ENCODE measurements at regions of chr4 and their contacts with region 1.

Region 1: GRCh38 chr4:103099691-103100392 is at the start of gene BDH2:
- DNase-seq: peak; percentile 85
- ATAC-seq: peak; percentile 87
- H3K4me3 ChIP-seq: peak within 1 kb of the TSS; percentile 52 to 70 (median 66)
- H3K27ac ChIP-seq: no peak within 1 kb of the TSS
- H3K4me1 ChIP-seq: peaks cover 47% of the 10 kb centered on the region
- H3K27me3 ChIP-seq: no peaks in the 10 kb centered on the region
- CTCF ChIP-seq: peak; percentile 90
- EP300 ChIP-seq: 0 out of 4 replicates have a peak, but pooled peaks of 1 of the 2 experiments have one; percentile 5
- POLR2A ChIP-seq: no peak
- RAD21 ChIP-seq: peak; percentile 72
- total RNA-seq, gene BDH2: 46.2 and 61.0 TPM in 2 replicates

Region 2: GRCh38 chr4:101123231-101123630 is 1976.6 kb before region 1 on chr4:
- CTCF ChIA-PET with region 1: no interaction called
- POLR2A ChIA-PET with region 1: no interaction called
- in situ Hi-C with region 1: no loop called
- intact Hi-C with region 1: loop called (anchors 5 kb)
- DNase-seq: no peak
- ATAC-seq: no peak
- H3K4me3 ChIP-seq: no peak overlapping the region
- H3K27ac ChIP-seq: no peak overlapping the region
- H3K4me1 ChIP-seq: peaks cover 13% of the 10 kb centered on the region
- H3K27me3 ChIP-seq: no peaks in the 10 kb centered on the region
- CTCF ChIP-seq: no peak
- EP300 ChIP-seq: no peak
- POLR2A ChIP-seq: no peak
- RAD21 ChIP-seq: no peak

Region 3: GRCh38 chr4:102430461-102430910 is 669.4 kb before region 1 on chr4:
- CTCF ChIA-PET with region 1: interaction called, 3 read pairs
- POLR2A ChIA-PET with region 1: no interaction called
- in situ Hi-C with region 1: loop called (anchors 10 kb)
- intact Hi-C with region 1: loop called (anchors 5 kb)
- DNase-seq: no peak
- ATAC-seq: no peak
- H3K4me3 ChIP-seq: peak overlapping the region; percentile 57 to 78 (median 63)
- H3K27ac ChIP-seq: peak overlapping the region; percentile 42
- H3K4me1 ChIP-seq: peaks cover 18% of the 10 kb centered on the region
- H3K27me3 ChIP-seq: no peaks in the 10 kb centered on the region; a peak in 1 of 5 replicates
- CTCF ChIP-seq: no peak
- EP300 ChIP-seq: no peak
- POLR2A ChIP-seq: no peak
- RAD21 ChIP-seq: no peak

Region 4: GRCh38 chr4:102439236-102439614 is 660.6 kb before region 1 on chr4:
- CTCF ChIA-PET with region 1: no interaction called
- POLR2A ChIA-PET with region 1: no interaction called
- in situ Hi-C with region 1: loop called (anchors 10 kb)
- intact Hi-C with region 1: loop called (anchors 5 kb)
- DNase-seq: peak; percentile 33
- ATAC-seq: no peak
- H3K4me3 ChIP-seq: no peak overlapping the region
- H3K27ac ChIP-seq: no peak overlapping the region
- H3K4me1 ChIP-seq: peaks cover 64% of the 10 kb centered on the region
- H3K27me3 ChIP-seq: no peaks in the 10 kb centered on the region
- CTCF ChIP-seq: no peak
- EP300 ChIP-seq: peak; percentile 32 to 51; a peak in 1 of 4 replicates
- POLR2A ChIP-seq: no peak
- RAD21 ChIP-seq: no peak

Region 5: DNA sequence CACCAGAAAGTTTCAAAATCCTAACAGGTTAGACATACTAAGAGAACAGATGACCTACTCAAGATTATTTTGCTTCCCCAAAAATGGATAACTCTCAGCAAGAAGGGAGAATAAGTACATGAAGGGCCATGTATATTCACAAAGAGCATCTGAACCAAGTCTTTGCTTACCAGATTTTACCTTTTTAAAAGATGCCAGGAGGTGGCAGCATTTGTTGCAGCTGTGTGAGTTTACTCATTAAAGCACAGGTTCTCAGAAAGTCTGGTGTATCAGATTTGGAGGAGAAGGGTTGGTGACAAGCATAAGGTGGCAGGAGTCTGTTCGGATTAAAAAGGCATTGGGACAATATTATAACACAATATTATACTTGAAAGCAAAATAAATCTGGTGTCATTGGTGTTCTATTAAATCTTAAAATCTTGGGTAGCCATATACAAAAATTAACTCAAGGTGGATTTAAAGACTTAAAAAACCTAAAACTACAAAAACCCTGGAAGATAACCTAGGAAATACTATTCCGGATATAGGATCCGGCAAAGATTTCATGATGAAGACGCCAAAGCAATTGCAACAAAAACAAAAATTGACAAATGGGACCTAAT is 650.0 kb before region 1 on chr4:
- CTCF ChIA-PET with region 1: no interaction called
- POLR2A ChIA-PET with region 1: no interaction called
- in situ Hi-C with region 1: no loop called
- intact Hi-C with region 1: loop called (anchors 5 kb)
- DNase-seq: peak; percentile 65
- ATAC-seq: peak; percentile 81
- H3K4me3 ChIP-seq: no peak overlapping the region
- H3K27ac ChIP-seq: no peak overlapping the region
- H3K4me1 ChIP-seq: peaks cover 3% of the 10 kb centered on the region
- H3K27me3 ChIP-seq: no peaks in the 10 kb centered on the region; a peak in 1 of 5 replicates
- CTCF ChIP-seq: peak; percentile 82
- EP300 ChIP-seq: no peak
- POLR2A ChIP-seq: no peak
- RAD21 ChIP-seq: peak; percentile 64

Region 6: DNA sequence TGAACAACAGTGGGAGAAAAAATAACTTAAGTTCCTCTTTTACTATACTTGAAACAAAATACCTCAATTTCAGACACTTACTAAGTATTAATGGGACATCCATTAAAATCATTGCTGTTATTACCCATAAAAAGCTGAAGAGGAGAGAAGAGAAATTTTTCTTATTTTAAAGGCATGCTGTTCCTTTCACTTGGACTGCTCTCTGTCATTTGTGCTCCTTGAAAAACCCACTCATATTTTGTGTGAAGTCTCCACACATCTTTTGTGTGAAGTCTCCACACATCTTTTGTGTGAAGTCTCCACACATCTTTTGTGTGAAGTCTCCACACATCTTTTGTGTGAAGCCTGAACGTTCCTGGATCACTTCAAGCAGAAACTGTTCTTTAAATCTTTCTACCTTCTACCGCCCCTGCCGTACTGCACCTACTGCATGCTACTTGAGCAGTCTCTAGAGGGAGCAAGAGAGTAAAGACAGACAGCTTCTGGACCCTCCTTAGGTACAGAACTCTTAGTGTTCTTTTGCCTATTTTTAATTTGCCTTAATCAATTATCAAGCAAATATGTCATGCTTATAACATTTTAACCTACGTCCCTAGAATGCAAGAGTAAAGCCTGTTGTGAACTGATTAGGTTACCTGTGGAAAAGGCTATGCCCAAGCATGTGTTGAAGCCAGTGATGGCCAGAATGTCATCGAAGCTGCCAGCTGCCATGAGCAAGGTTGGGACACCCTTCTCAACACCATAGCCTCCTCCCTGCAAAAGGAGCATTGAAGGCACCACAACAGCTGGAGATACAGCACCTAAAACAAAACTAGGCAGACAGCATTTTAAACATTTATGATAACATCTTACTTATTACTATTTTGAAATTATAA is 53.2 kb before region 1 on chr4:
- CTCF ChIA-PET with region 1: no interaction called
- POLR2A ChIA-PET with region 1: no interaction called
- in situ Hi-C with region 1: no loop called
- intact Hi-C with region 1: loop called (anchors 2 kb)
- DNase-seq: peak; percentile 50
- ATAC-seq: peak; percentile 99
- H3K4me3 ChIP-seq: no peak overlapping the region
- H3K27ac ChIP-seq: no peak overlapping the region
- H3K4me1 ChIP-seq: peaks cover 2% of the 10 kb centered on the region
- H3K27me3 ChIP-seq: no peaks in the 10 kb centered on the region
- CTCF ChIP-seq: peak; percentile 72
- EP300 ChIP-seq: no peak
- POLR2A ChIP-seq: no peak
- RAD21 ChIP-seq: peak; percentile 60; the same call in 1 of the 2 replicates

Region 7: DNA sequence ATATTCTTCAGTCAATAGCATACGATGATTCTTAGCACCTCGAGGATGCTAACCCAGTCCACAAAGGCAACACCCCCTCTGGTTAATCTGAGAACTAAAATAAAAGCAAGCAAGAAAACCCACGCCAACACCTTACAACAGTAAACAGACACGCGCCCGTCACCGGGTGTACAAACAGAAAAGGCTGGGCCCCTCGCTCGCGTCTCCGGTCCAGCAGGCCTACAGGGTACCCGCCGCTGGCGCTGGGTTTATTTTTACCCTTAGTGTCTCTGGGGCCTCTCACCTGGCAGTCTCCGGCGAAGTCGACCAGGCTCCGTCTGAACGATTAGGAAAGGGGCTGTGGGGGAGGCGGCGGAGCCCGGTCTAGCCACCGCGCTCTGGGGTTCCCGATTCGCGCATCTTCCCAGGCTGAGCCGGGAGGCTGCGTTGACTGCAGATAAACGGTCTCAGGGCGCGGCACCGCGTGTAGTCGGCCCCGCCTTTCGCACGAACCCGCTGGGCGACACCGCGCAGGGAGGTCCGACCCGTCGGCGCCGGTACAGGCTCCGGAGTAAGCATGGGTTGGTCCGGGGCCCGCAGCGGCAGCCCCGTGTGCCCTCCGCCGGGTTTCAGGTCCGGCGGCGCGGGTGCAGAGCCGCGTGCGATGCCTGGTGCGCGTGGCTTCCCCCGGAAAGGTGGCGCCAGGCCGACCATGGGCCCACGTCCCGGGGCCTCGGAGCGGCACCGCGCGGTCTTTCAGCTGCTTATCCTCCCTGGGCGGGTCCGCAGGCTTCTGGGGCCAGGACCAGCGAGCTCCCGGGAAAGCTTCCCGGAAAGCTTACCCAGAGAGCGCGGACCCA is 23.7 kb before region 1 on chr4:
- CTCF ChIA-PET with region 1: no interaction called
- POLR2A ChIA-PET with region 1: interaction called, 10 read pairs
- in situ Hi-C with region 1: no loop called
- intact Hi-C with region 1: no loop called
- DNase-seq: peak; percentile 53
- ATAC-seq: peak; percentile 77
- H3K4me3 ChIP-seq: peak overlapping the region; percentile 81 to 90 (median 87)
- H3K27ac ChIP-seq: peak overlapping the region; percentile 90
- H3K4me1 ChIP-seq: peaks cover 42% of the 10 kb centered on the region
- H3K27me3 ChIP-seq: no peaks in the 10 kb centered on the region; a peak in 1 of 5 replicates
- CTCF ChIP-seq: no peak
- EP300 ChIP-seq: no peak
- POLR2A ChIP-seq: peak; percentile 62 to 72
- RAD21 ChIP-seq: peak; percentile 47

Region 8: GRCh38 chr4:103137446-103137827 is 37.6 kb after region 1 on chr4:
- CTCF ChIA-PET with region 1: no interaction called
- POLR2A ChIA-PET with region 1: no interaction called
- in situ Hi-C with region 1: no loop called
- intact Hi-C with region 1: no loop called
- DNase-seq: no peak
- ATAC-seq: no peak
- H3K4me3 ChIP-seq: no peak overlapping the region
- H3K27ac ChIP-seq: no peak overlapping the region
- H3K4me1 ChIP-seq: no peaks in the 10 kb centered on the region
- H3K27me3 ChIP-seq: no peaks in the 10 kb centered on the region
- CTCF ChIP-seq: no peak
- EP300 ChIP-seq: no peak
- POLR2A ChIP-seq: no peak
- RAD21 ChIP-seq: no peak